Activated CD4-positive, alpha-beta T cell treated with anti-CD3 and anti-CD28 coated beads, Interleukin-2, amount 10 ng/mL, durations not matched to agents 7 days and 5 days (primary cell): ENCODE measurements at regions of chr13 and their contacts with region 1.

Region 1: DNA sequence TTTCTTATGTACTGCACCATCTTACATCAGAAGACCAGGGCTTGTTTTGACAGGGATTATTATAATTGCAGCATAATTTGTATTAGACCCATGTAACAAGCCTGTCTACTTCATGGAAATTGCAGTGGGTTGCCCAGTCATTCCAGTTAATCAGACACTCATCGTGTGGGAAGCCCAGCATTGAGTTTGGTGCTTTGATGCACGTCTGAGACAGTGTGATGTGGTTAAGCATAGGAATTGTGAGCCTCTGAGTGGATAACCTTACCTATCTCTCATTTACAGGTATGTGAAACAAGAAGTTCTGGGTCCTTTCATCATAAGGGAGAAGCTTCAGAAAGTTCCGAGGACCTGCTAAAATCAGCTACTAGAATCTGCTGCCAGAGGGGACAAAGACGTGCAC is 12.8 kb downstream of the RGCC start:
- DNase-seq: no peak
- H3K4me3 Mint-ChIP-seq: no peak overlapping the region
- H3K27ac Mint-ChIP-seq: no peak overlapping the region
- H3K4me1 Mint-ChIP-seq: peaks cover 65% of the 10 kb centered on the region
- H3K27me3 Mint-ChIP-seq: no peaks in the 10 kb centered on the region

Region 2: DNA sequence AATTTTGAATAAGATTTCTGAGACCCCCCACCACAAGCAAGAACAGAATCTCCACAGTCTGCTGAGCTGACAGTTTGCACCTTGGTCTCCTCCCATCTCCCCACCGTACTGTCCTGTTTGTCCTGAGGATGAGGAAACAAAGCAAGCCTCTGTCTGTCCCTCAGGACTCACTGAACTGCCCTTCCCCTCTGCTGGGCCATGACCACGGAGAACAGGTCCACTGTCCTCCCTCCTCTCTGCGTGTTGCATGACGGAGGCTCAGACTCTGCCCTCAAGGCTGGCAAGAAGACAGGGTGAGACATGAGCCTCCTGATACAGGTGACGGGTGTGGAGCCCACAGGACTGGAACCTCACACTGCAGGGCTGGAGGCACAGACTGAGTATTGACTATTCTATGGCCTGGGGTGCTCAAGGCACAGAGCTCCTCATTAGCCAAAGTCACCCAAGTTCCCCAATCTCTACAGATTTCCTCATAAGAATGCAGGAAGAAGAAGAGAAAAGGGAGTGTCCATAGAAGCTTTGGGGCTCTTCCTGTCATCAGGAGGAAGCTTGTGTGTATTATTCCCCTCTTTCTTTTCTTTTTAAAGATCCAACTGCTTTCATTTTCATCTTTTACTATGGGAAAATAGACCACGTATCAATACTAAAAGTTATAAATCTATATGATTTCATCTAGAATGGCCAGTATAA is 35.2 kb before region 1 on chr13:
- CTCF ChIA-PET with region 1: no interaction called
- POLR2A ChIA-PET with region 1: no interaction called
- DNase-seq: no peak
- H3K4me3 Mint-ChIP-seq: no peak overlapping the region
- H3K27ac Mint-ChIP-seq: no peak overlapping the region
- H3K4me1 Mint-ChIP-seq: peaks cover 4% of the 10 kb centered on the region
- H3K27me3 Mint-ChIP-seq: no peaks in the 10 kb centered on the region

Region 3: DNA sequence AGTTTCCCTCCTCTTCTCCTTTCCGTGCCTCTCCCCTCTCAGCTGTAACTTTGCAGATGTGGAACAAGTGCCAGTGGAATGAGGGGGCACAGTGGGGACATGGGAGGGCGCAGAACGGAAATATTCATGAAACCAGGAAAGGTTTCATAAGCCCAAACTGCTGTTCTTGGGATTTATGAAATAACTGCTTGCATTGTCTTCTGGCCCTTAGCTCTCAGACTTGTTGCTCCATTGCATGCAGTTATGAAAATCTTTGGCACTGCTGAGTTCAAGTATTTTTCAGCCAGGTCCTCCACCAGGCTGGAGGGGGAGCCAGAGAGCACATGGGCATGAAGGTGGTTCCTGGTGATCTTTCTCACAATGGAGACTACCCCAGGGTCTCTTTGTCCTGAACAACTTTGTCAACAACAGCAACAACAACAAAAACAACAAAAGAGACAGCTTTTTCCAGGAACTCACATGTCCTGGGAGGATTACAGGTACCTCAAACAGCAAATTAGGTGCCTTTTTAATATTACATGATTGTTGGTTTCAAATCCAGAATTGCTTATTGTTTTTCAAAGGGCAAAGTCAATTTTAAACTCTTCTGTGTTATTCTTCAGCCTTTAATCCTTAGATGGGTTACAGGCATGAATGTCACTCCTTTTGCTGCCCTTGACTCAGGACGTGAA is 11.3 kb before region 1 on chr13:
- CTCF ChIA-PET with region 1: interaction called, 27 read pairs
- POLR2A ChIA-PET with region 1: no interaction called
- DNase-seq: peak; percentile 78
- H3K4me3 Mint-ChIP-seq: peak overlapping the region; percentile 76
- H3K27ac Mint-ChIP-seq: peak overlapping the region; percentile 84
- H3K4me1 Mint-ChIP-seq: peaks cover 58% of the 10 kb centered on the region
- H3K27me3 Mint-ChIP-seq: peaks cover 25% of the 10 kb centered on the region

Region 4: GRCh38 chr13:41492404-41493260 is 22.4 kb after region 1 on chr13:
- CTCF ChIA-PET with region 1: interaction called, 15 read pairs
- POLR2A ChIA-PET with region 1: interaction called, 5 read pairs
- DNase-seq: peak; percentile 44
- H3K4me3 Mint-ChIP-seq: peak overlapping the region; percentile 15
- H3K27ac Mint-ChIP-seq: peak overlapping the region; percentile 97
- H3K4me1 Mint-ChIP-seq: peaks cover 85% of the 10 kb centered on the region
- H3K27me3 Mint-ChIP-seq: no peaks in the 10 kb centered on the region

Region 5: GRCh38 chr13:42305503-42305902 is 835.3 kb after region 1 on chr13:
- CTCF ChIA-PET with region 1: no interaction called
- POLR2A ChIA-PET with region 1: no interaction called
- DNase-seq: no peak
- H3K4me3 Mint-ChIP-seq: no peak overlapping the region
- H3K27ac Mint-ChIP-seq: no peak overlapping the region
- H3K4me1 Mint-ChIP-seq: peaks cover 12% of the 10 kb centered on the region
- H3K27me3 Mint-ChIP-seq: no peaks in the 10 kb centered on the region